Gastrocnemius medialis (tissue), 4 donors: ENCODE measurements at regions of chr18 and their contacts with region 1.

Region 1: DNA sequence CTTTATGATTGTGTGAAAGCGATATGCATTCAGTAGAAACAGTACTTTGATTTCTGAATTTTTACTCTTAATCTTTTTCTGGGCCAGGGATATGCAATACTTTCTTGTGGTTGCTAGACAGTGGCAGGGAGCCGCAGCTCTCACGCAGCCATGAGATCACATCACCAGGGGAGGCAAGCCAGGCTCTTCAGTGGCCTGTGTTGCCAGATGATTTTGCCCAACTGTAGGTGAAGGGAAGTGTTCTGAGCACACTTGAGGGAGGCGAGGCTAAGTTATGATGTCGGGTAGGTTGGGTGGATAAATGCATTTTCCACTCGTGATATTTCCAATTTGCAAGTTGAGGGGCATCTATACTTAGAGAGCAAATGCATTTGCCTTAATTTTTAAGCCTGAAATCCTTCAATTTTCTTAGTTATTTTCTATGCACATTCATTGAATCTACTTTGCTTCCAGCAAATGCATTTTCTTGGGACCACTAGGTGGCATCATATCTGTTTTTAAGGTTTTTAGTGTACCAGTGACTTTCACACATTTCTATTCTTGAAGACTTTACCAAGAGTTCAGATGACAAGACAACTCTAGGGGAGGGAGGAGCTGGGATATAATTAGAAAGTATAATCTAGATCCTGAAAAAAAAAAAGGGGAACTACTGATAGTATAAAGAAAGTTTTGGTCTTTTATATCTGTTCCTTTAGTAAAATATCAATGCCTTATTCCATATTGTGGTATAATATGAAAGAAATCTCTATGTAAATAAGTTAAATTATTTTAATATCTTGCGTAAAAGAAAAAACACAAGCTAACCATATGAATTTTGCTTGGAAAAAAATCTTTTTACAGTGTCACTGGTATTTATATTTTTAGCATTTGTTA is 643.3 kb downstream of the SOCS6 start:
- DNase-seq: no peak
- ATAC-seq: no peak
- H3K4me3 ChIP-seq: no peak overlapping the region
- H3K27ac ChIP-seq: no peak overlapping the region
- H3K4me1 ChIP-seq: no peaks in the 10 kb centered on the region
- H3K27me3 ChIP-seq: no peaks in the 10 kb centered on the region
- CTCF ChIP-seq: peak in 1 of 5 experiments; percentile 25
- POLR2A ChIP-seq: no peak

Region 2: GRCh38 chr18:70848329-70848728 is 83.8 kb before region 1 on chr18:
- in situ Hi-C with region 1: loop called in 1 of 4 experiments (anchors 25 kb)
- intact Hi-C with region 1: no loop called
- DNase-seq: no peak
- ATAC-seq: no peak
- H3K4me3 ChIP-seq: no peak overlapping the region
- H3K27ac ChIP-seq: no peak overlapping the region
- H3K4me1 ChIP-seq: no peaks in the 10 kb centered on the region
- H3K27me3 ChIP-seq: no peaks in the 10 kb centered on the region
- CTCF ChIP-seq: no peak
- POLR2A ChIP-seq: no peak